Activated naive CD4-positive, alpha-beta T cell treated with anti-CD3 and anti-CD28 coated beads, Interleukin-2, amount 10 ng/mL, durations not matched to agents 7 days and 5 days (primary cell): ENCODE measurements at regions of chr7 and their contacts with region 1.

Region 1: GRCh38 chr7:43700059-43700501 is 29.2 kb downstream of the COA1 start:
- DNase-seq: no peak
- H3K4me3 Mint-ChIP-seq: no peak overlapping the region
- H3K27ac Mint-ChIP-seq: no peak overlapping the region
- H3K4me1 Mint-ChIP-seq: peaks cover 62% of the 10 kb centered on the region
- H3K27me3 Mint-ChIP-seq: no peaks in the 10 kb centered on the region

Region 2: DNA sequence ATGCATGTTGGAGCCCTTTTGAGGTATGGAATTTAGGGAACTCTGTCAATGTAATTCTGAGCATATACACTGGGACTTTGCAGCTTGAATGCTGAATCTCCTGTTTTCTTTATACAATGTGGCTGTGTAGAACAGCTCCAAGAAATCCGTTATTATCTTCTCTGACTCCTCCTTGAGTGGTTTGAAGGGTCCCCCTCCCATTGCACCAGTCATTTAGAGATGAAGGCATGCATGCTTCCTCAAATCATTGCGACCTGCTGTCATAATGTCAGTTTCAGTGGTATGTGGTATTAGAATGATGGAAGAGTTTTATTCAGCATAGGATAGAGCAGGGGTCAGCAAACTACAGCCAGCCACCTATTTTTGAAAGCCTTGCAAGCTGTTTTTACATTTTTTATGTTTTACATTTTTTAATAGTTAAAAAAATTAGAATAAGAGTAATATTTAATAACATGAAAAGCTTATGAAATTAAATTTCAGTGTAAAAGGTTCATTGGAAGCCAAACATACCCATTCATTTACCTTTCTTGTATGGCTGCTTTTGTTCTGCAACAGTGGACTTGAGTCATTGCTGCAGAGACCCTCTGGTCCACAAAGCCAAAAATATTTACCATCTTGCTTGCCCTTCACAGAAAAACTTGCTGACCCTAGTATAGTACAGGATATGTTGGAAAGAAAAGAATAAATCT is 109.1 kb before region 1 on chr7:
- CTCF ChIA-PET with region 1: interaction called, 393 read pairs
- DNase-seq: no peak
- H3K4me3 Mint-ChIP-seq: no peak overlapping the region
- H3K27ac Mint-ChIP-seq: peak overlapping the region; percentile 46
- H3K4me1 Mint-ChIP-seq: peaks cover 85% of the 10 kb centered on the region
- H3K27me3 Mint-ChIP-seq: no peaks in the 10 kb centered on the region

Region 3: DNA sequence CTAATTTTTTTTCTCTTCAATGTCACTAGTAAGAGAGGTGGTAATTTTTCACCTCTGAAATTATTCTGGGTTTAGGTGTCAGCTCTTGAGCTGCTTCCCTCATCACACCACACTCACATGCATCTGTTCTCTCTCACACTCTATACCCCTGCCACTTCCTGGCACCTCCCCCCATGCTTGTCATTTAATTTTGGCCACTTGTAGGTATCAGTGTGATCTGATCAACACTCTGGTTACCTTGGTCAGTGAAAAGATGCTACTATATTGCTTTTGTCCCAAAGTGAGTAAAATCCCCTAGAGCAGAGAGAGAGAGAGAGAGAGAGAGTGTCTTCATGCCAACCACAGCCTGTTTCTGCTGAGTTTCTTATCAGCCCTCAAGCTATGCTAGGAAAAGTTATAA is 74.6 kb before region 1 on chr7:
- CTCF ChIA-PET with region 1: interaction called, 19 read pairs
- DNase-seq: peak; percentile 56
- H3K4me3 Mint-ChIP-seq: no peak overlapping the region
- H3K27ac Mint-ChIP-seq: peak overlapping the region; percentile 80
- H3K4me1 Mint-ChIP-seq: peaks cover 91% of the 10 kb centered on the region
- H3K27me3 Mint-ChIP-seq: no peaks in the 10 kb centered on the region

Region 4: DNA sequence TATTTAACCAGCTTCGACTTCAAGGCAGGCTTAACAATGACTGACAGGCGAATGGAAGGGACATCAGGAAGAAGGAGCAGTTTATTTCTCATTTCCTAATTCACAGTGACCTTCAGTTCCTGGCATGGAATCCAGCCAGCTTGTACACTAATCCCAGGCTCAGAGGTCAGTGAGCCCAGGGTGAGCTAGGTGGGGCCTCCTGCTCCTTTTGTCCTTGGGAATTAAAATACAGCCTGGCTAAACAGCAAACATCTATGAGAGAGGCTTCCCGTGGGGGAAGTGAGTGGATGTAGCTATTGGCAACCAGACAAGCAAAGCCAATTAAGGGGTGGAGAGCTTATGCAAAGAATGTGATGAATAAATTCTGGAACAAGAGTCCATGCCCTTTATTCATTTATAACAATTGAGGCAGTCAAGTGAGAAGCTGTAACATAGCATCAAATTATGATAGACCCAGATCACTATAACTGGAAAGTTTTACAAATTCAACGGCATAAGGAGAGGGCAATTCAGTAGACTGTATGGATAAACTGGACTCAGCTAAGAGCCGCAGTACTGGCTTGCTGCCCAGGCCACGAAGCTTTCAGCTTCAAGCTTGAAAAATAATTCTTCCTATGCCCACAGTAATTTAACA is 60.1 kb before region 1 on chr7:
- CTCF ChIA-PET with region 1: interaction called, 11 read pairs
- DNase-seq: no peak
- H3K4me3 Mint-ChIP-seq: no peak overlapping the region
- H3K27ac Mint-ChIP-seq: peak overlapping the region; percentile 64
- H3K4me1 Mint-ChIP-seq: peaks cover 85% of the 10 kb centered on the region
- H3K27me3 Mint-ChIP-seq: no peaks in the 10 kb centered on the region

Region 5: DNA sequence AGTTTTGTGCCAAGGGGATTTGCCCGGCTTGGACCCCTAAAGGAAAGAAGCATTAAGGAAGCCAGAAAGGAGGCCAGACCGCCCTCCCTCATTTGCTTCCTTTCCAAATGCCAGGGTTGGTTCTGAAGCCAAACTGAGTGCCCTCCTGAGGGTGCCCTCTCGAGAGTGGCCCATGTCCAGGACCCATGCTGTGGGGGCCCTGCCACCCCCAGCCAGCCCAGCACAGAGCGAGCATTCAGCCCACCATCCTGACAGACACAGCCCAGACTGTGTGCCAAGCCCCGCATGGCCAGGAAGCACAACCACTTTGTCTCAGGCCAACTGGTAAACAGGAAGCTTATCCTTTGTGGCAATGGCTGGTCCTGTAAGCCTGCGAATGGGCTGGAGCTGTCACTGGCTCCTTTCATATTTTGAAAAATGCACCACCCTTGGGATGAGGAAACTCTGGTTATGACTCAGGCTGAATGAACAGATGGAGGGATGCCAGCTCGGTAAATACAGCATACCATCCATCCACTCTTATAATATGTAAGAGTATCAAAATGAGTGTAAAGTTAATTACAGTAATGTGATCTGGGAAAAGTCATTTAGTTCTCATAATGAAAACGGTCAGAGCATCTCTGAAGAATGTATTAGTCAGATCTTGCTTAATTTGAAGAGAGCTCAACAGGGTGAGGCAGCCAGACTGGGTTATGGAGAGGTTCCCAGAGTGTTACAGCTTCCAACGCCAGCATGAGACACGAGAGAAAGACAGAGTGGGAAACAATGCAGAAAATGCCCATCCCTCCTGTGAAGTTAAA is 52.2 kb before region 1 on chr7:
- CTCF ChIA-PET with region 1: interaction called, 43 read pairs
- DNase-seq: peak; percentile 57
- H3K4me3 Mint-ChIP-seq: peak overlapping the region; percentile 70
- H3K27ac Mint-ChIP-seq: peak overlapping the region; percentile 90
- H3K4me1 Mint-ChIP-seq: peaks cover 94% of the 10 kb centered on the region
- H3K27me3 Mint-ChIP-seq: no peaks in the 10 kb centered on the region

Region 6: DNA sequence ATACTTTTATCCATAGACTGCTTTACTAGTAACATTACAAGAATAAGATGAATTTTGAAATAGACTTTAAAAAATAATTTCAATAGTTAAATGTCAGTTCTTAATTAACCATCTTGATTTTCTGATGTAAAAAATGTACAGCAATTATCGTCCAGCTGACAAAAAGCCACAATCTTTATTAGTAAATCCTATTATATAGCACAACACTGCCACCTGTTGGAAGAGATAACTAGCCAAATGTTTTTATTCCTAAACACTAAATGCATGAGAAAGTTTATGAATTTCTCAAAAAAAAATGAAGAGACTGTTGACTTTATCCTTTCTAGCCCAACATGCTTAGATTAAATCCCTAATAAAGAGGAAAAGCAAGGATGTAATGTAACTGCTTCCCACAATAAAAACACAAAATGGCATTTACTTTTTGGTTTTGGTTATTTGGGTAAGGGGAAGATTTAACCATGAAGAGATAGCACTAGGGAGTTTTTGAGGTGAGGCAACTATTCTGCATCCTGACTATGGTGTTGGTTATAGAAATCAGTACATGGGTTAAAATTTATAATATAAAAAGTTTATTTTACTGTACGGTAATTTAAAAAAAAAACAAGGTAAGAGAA is 21.2 kb after region 1 on chr7:
- CTCF ChIA-PET with region 1: interaction called, 29 read pairs
- DNase-seq: no peak
- H3K4me3 Mint-ChIP-seq: no peak overlapping the region
- H3K27ac Mint-ChIP-seq: no peak overlapping the region
- H3K4me1 Mint-ChIP-seq: peaks cover 12% of the 10 kb centered on the region
- H3K27me3 Mint-ChIP-seq: no peaks in the 10 kb centered on the region

Region 7: DNA sequence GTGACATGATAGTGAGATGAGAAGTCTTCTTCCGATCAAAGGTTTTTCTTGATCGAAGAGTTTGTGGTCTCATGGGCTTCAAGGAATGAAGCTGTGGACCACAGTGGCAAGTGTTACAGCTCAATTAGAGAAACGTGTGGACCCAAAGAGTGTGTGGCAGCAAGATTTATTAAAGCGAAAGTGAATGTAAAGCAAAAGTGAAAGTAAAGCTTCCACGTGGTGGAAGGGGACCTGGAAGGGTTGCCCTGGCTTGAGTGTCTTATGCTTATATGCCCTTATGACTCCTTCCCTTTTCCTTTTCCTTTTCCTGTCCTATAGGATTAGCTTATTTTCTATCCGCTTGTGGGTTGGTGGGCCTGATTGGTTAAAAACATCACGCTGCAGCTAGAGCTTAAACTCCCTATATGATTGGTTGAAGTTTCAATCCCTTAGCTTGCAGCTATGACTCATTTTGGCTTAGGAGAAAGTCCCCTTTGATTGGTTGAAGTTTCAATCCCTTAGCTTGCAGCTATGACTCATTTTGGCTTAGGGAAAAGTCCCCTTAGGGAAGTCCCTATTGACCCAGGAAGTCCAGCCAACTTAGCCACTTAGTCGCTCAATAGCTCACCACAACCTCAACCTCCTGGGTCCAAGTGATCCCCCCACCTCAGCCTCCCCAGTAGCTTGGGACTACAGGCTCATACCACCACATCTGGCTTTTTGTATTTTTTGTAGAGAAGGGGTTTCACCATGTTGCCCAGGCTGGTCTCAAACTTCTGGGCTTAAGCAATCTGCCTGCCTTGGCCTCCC is 134.6 kb after region 1 on chr7:
- CTCF ChIA-PET with region 1: interaction called, 26 read pairs
- DNase-seq: peak; percentile 40
- H3K4me3 Mint-ChIP-seq: peak overlapping the region; percentile 60
- H3K27ac Mint-ChIP-seq: peak overlapping the region; percentile 61
- H3K4me1 Mint-ChIP-seq: peaks cover 21% of the 10 kb centered on the region
- H3K27me3 Mint-ChIP-seq: peaks cover 36% of the 10 kb centered on the region